Activated T-helper 1 cell treated with anti-CD3 and anti-CD28 coated beads, Interleukin-12 subunit alpha, Interleukin-12 subunit beta, Interleukin-2, Interleukin-4 antibody, amounts not matched to agents 30 ng/mL and 10 ng/mL and 1 ng/mL, durations not matched to agents 14 hours and 24 hours and 36 hours (primary cell): ENCODE measurements at regions of chr1 and their contacts with region 1.

Region 1: GRCh38 chr1:205485338-205486228 is 18.9 kb upstream of the CDK18 start:
- DNase-seq: peak; percentile 66
- H3K4me3 Mint-ChIP-seq: no peak overlapping the region
- H3K27ac Mint-ChIP-seq: no peak overlapping the region
- H3K4me1 Mint-ChIP-seq: peaks cover 23% of the 10 kb centered on the region
- H3K27me3 Mint-ChIP-seq: peaks cover 49% of the 10 kb centered on the region

Region 2: GRCh38 chr1:205335643-205336091 is 149.9 kb before region 1 on chr1:
- intact Hi-C with region 1: loop called (anchors 2 kb)
- DNase-seq: peak; percentile 65
- H3K4me3 Mint-ChIP-seq: no peak overlapping the region
- H3K27ac Mint-ChIP-seq: no peak overlapping the region
- H3K4me1 Mint-ChIP-seq: peaks cover 5% of the 10 kb centered on the region
- H3K27me3 Mint-ChIP-seq: peaks cover 39% of the 10 kb centered on the region

Region 3: DNA sequence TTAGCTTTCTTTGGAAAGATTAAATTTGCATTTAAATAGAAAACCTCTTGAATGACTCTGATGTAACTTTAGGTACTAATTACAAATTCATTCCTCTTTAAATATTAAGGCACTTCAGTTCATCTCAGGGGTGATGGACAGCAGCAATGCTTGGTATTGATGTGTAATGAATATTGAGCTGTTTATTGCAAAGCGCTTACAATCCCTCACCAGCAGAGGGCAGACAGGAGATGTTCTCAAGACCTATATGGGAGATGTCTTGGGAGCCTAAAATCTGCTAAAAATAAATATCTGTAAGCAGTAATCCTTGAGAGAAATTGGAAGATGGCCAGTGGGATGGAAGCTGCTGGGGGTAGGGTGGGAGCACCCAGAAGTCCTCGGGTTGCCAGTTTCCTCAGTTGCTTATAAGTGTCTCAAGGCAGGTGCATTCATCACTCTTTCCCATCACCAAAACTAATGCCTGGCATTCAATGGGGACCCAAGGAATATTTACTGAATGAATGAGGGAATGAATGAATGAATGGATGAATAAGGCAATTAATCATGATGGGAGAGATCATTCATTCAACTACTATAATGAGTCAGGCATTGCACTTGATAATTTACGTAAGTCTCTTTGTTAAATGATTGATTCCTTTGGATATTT is 131.2 kb before region 1 on chr1:
- intact Hi-C with region 1: loop called (anchors 1 kb)
- DNase-seq: peak; percentile 27
- H3K4me3 Mint-ChIP-seq: no peak overlapping the region
- H3K27ac Mint-ChIP-seq: no peak overlapping the region
- H3K4me1 Mint-ChIP-seq: no peaks in the 10 kb centered on the region
- H3K27me3 Mint-ChIP-seq: peaks cover 19% of the 10 kb centered on the region

Region 4: DNA sequence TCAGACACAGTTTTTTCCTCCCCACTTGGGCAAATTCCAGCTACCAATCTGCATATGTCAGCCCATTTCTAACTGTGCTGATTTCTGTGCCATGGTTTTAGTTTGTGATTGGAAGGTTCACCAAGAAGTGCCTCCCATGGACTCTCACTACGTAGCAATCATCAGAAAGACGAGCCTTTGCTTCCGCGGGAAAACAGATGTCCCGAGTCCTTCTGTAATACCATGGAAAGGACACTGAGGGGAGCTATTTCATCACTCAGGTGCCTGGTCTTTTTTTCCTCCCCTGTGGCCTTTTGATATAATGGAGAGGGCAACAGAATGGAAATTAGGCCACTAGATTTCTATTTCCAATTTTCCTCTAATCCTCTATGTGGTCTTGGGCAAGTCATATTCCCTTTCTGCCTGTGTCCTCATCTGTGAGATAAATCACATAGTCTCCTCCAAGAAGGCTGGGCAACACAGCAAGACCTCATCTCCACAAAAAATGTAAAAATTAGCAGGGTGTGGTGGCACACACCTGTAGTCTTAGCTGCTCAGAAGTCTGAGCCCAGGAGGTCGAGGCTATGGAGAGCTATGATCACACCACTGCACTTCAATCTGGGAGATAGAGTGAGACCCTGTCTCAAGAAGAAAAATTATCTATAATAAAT is 88.5 kb before region 1 on chr1:
- intact Hi-C with region 1: loop called (anchors 1 kb)
- DNase-seq: no peak
- H3K4me3 Mint-ChIP-seq: no peak overlapping the region
- H3K27ac Mint-ChIP-seq: no peak overlapping the region
- H3K4me1 Mint-ChIP-seq: no peaks in the 10 kb centered on the region
- H3K27me3 Mint-ChIP-seq: peaks cover 25% of the 10 kb centered on the region

Region 5: DNA sequence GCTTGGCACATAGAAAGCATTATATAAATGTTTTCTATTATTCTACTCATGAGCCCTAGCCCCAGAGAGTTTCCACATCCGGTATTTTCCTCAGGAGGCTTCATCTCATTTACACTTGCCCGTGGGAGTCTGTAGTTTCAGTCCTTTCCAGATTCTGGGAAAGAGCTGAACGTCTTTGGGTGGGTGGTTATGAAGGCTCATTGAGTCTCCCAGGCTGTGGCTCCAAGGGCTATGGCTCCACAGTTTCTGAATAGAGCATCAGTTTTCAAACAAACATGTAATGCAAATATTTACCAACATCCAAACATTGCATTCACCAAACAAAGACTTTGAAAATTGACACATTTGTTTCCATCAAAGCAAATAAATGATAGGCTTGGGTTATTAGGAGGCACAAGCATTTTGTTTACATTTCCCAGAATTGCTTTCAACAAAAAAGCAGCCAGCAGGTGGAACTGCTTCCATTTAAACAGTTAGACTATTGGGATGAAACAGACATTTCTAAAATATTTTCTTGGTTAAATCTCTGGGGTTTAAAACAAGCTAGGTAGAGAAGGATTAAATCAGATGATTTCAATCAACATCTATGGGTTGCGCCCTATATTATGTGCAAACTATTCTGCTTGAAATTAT is 62.5 kb before region 1 on chr1:
- intact Hi-C with region 1: loop called (anchors 1 kb)
- DNase-seq: no peak
- H3K4me3 Mint-ChIP-seq: no peak overlapping the region
- H3K27ac Mint-ChIP-seq: no peak overlapping the region
- H3K4me1 Mint-ChIP-seq: no peaks in the 10 kb centered on the region
- H3K27me3 Mint-ChIP-seq: peaks cover 49% of the 10 kb centered on the region

Region 6: GRCh38 chr1:205458777-205459566 is 26.6 kb before region 1 on chr1:
- intact Hi-C with region 1: loop called (anchors 1 kb)
- DNase-seq: peak; percentile 29
- H3K4me3 Mint-ChIP-seq: no peak overlapping the region
- H3K27ac Mint-ChIP-seq: no peak overlapping the region
- H3K4me1 Mint-ChIP-seq: peaks cover 5% of the 10 kb centered on the region
- H3K27me3 Mint-ChIP-seq: peaks cover 59% of the 10 kb centered on the region

Region 7: DNA sequence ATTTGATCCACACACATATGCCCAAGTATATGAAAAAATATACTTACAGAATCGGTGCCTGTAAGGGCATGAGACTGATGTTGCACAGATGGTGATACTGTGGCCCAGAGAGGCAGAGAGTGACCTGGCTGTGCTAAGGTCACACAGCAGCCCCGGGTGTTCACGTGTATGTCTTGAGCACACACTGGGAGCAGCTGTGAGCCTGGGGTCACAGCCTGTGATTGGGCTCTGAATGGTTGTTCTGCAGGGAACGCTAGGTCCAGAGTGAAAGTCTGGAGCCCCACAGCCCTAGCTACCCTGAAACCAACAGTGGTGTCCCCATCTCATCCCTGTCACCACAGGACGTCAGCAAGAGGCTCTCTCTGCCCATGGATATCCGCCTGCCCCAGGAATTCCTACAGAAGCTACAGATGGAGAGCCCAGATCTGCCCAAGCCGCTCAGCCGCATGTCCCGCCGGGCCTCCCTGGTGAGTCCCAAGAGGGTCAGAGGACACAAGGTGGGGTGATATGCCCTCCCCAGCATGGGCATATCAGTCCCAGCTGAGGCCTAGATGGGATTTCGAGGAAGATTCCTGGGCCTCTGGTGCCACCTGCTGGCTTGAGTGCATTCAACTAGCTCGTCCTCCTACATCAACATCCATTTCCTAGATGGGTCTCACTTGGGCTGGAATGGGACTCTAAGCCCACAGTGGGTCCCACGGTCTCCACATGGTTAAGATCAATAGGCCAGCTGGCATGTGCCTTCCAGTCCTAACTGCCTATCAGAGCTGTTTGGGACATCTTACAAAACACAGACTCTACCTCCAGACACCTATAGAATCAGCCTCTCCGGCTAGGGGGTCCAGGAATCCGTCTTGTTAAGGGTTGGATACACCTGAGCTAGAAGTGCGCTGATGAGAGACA is 38.6 kb after region 1 on chr1:
- intact Hi-C with region 1: loop called (anchors 1 kb)
- DNase-seq: peak; percentile 45
- H3K4me3 Mint-ChIP-seq: no peak overlapping the region
- H3K27ac Mint-ChIP-seq: no peak overlapping the region
- H3K4me1 Mint-ChIP-seq: no peaks in the 10 kb centered on the region
- H3K27me3 Mint-ChIP-seq: peaks cover 3% of the 10 kb centered on the region

Region 8: GRCh38 chr1:206106328-206107167 is 621.0 kb after region 1 on chr1:
- intact Hi-C with region 1: no loop called
- DNase-seq: peak; percentile 66
- H3K4me3 Mint-ChIP-seq: no peak overlapping the region
- H3K27ac Mint-ChIP-seq: no peak overlapping the region
- H3K4me1 Mint-ChIP-seq: no peaks in the 10 kb centered on the region
- H3K27me3 Mint-ChIP-seq: peaks cover 28% of the 10 kb centered on the region